ENCODE measurements at regions of chr1 and their contacts with region 1.

Region 1: DNA sequence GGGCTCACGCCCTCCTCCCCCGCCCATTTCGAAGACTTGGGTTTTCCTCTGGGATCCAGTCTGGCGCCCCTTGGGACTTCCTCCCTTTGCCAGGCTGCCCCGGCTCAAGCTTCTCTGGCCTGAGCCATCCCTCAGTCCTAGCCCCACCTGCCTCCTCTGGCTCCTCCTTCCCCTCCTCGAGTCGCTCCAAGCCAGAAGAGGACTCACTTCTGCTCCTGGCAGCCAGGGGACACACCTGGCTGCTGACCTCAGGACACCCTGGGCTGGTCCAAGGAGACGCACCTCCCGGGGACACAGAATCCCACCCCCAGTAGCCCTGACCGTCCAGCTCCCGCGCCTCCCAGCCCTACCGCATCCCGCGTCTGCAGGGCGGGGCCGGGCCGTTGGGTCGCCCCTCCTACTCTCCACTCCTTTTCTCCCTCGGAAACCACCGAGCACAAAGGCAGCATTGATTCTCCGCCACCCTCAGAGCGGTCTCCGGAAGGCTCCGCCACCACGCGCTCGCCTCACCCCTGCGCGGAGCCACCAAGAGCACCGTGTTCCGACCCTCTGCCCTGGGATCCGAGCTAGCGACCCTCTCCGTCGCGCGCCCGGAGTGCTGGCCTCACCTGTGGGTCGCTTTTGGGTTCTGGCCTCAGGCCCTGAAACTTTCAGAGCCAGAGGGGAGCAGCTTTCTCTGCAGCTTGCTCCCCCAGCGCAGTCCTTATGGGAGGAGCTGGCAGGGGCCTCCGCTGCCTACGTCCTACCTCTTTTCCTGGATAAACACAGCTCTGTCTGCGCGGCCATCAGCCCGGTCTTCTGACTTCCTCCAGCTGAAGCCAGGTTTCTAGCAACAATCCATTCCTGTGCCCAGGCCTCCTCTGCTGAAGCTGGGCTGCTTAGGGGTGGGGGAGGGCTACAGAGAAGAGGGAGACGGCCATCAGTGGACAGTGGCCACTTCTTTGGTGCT is at the start of gene C2CD4D:
- DNase-seq: peak; percentile 84
- H3K4me3 Mint-ChIP-seq: peak within 1 kb of the TSS; percentile 85
- H3K27ac Mint-ChIP-seq: peak within 1 kb of the TSS; percentile 91
- H3K4me1 Mint-ChIP-seq: peaks cover 41% of the 10 kb centered on the region
- H3K27me3 Mint-ChIP-seq: no peaks in the 10 kb centered on the region
- CTCF ChIP-seq: no peak
- total RNA-seq, gene C2CD4D: not detected in 2 replicates

Region 2: DNA sequence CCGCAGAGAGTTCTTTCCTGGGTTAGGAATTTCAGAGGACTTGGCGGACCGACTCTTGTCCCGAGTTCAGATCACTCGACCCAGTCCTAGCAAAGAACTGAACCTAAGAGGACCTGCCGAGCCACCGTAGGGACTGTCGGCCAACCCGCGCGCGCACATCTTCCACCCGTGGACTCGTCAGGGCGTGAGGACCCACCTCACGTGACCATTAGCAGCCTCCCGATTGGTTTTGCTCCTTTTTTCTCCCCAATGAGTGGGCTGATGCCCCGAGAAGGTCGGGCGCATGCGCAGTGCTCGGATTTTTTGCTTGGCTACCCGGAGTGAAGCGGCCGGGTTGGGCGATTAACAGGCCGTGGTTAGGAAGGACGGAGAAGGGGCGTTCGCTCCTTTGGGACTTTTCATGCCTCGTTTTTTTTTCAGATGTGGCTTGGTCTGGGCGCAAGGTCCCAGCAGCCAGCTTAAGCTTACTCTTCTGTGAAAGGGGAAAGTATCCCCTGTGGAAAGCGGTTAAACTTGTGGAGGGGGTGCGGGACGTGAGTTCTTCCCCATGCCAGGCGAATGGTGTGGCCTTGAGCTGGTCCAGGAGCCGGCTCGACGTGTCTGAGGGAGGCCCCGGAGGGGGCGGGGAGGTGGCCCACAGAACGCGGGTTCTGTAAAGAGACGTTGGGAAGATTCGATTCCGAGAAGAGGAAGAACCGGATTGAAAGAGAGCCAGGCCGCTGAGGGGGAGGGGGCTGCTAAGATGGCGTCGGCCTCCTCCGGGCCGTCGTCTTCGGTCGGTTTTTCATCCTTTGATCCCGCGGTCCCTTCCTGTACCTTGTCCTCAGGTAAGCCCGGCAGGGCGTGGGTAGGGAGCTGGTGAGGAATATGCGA is 641.2 kb before region 1 on chr1 and contains the start of gene PIP5K1A:
- CTCF ChIA-PET with region 1: no interaction called
- POLR2A ChIA-PET with region 1: interaction called, 3 read pairs
- intact Hi-C with region 1: loop called (anchors 2 kb)
- DNase-seq: peak; percentile 100
- H3K4me3 Mint-ChIP-seq: peak within 1 kb of the TSS; percentile 93
- H3K27ac Mint-ChIP-seq: peak within 1 kb of the TSS; percentile 95
- H3K4me1 Mint-ChIP-seq: peaks cover 40% of the 10 kb centered on the region
- H3K27me3 Mint-ChIP-seq: no peaks in the 10 kb centered on the region
- CTCF ChIP-seq: no peak
- total RNA-seq, gene PIP5K1A: 150 and 163 TPM in 2 replicates

Region 3: DNA sequence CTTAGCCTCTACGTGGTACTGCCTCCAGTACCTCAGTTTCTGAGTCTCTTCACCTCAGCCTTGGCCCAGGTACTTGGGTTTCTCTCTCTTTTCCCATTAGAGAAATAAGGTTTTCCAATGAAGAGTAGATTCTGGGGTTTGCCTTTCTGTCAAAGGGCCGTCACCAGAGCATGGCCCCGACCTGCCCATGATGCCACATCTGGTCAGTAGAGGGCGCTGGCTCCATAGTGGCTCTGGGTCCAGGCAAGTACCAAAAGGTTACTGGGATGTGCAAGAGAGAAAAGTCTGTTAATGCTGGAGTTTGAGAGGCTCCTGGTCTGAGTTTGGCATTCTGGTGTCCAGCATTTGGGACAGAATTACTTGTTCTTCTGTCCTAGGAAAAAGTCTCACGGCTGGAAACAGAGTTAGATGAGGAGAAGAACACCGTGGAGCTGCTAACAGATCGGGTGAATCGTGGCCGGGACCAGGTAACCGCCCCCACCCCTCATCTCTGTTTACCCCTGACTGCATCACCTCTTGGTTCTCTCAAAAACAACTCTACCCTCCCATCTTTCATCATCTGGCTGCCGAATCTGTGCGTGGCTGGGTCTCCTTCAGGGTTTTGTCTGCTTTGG is 305.0 kb before region 1 on chr1:
- CTCF ChIA-PET with region 1: interaction called, 8 read pairs
- POLR2A ChIA-PET with region 1: interaction called, 4 read pairs
- intact Hi-C with region 1: loop called (anchors 1 kb)
- DNase-seq: peak; percentile 89
- H3K4me3 Mint-ChIP-seq: no peak overlapping the region
- H3K27ac Mint-ChIP-seq: no peak overlapping the region
- H3K4me1 Mint-ChIP-seq: peaks cover 28% of the 10 kb centered on the region
- H3K27me3 Mint-ChIP-seq: no peaks in the 10 kb centered on the region
- CTCF ChIP-seq: peak; percentile 95

Region 4: DNA sequence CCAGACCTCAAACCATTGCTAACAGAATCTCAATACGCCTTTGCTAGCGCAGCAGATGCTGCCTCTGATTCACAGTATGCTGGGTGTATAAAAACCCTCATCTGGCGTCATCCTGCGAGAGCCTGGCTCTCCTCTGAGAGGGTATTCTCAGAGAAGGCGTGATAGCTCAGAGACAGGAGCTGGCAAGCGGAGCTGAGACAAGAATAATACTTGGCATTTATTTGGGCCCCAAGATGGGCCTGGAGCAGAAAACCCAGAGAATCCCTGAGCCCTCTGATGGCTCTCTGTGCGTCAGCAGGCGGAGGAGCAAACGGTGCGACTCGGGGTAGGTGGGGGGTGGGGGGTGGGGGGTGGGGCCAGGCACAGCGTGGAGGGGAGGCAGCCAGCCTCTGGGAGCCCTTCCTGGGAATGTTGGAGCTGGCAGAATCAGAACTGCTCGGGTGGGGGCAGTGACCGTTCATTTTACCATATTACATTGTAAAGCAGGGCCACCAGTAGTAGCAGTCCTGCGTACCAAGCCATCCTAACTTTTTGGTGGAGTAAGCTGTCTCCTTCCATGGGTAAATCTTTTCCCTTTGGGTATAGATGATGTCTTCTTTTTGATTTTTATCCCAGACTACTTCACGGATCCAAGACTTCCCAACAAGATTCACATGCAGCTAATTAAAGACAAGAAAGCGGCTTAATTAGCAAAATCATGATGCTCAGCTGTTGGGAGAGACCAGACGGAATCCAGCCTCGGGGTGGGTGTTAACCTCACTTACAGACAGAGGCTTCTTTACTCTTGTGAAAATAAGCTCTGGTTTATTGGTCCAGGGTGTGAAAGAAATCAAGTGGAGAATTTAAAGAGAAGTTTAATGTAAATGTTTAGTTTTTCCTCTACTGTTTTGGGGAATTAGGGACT is 111.3 kb before region 1 on chr1:
- CTCF ChIA-PET with region 1: interaction called, 26 read pairs
- POLR2A ChIA-PET with region 1: no interaction called
- intact Hi-C with region 1: no loop called
- DNase-seq: no peak
- H3K4me3 Mint-ChIP-seq: no peak overlapping the region
- H3K27ac Mint-ChIP-seq: no peak overlapping the region
- H3K4me1 Mint-ChIP-seq: no peaks in the 10 kb centered on the region
- H3K27me3 Mint-ChIP-seq: peaks cover 27% of the 10 kb centered on the region
- CTCF ChIP-seq: no peak

Region 5: GRCh38 chr1:151762941-151763921 is 76.5 kb before region 1 on chr1 and contains the start of gene MRPL9:
- CTCF ChIA-PET with region 1: interaction called, 16 read pairs
- POLR2A ChIA-PET with region 1: interaction called, 8 read pairs
- intact Hi-C with region 1: loop called (anchors 1 kb)
- DNase-seq: peak; percentile 84
- H3K4me3 Mint-ChIP-seq: peak within 1 kb of the TSS; percentile 92
- H3K27ac Mint-ChIP-seq: peak within 1 kb of the TSS; percentile 97
- H3K4me1 Mint-ChIP-seq: peaks cover 17% of the 10 kb centered on the region
- H3K27me3 Mint-ChIP-seq: no peaks in the 10 kb centered on the region
- CTCF ChIP-seq: no peak
- total RNA-seq, gene MRPL9: 145 and 146 TPM in 2 replicates

Region 6: GRCh38 chr1:151790071-151790940 is 49.4 kb before region 1 on chr1 and contains the start of gene TDRKH:
- CTCF ChIA-PET with region 1: interaction called, 5 read pairs
- POLR2A ChIA-PET with region 1: interaction called, 5 read pairs
- intact Hi-C with region 1: loop called (anchors 5 kb)
- DNase-seq: peak; percentile 100
- H3K4me3 Mint-ChIP-seq: peak within 1 kb of the TSS; percentile 83
- H3K27ac Mint-ChIP-seq: peak within 1 kb of the TSS; percentile 47
- H3K4me1 Mint-ChIP-seq: peaks cover 9% of the 10 kb centered on the region
- H3K27me3 Mint-ChIP-seq: no peaks in the 10 kb centered on the region
- CTCF ChIP-seq: peak; percentile 26
- total RNA-seq, gene TDRKH: 5.6 and 10.6 TPM in 2 replicates

Region 7: GRCh38 chr1:151858030-151858691 is 18.4 kb after region 1 on chr1:
- CTCF ChIA-PET with region 1: interaction called, 18 read pairs
- POLR2A ChIA-PET with region 1: interaction called, 12 read pairs
- intact Hi-C with region 1: no loop called
- DNase-seq: peak; percentile 66
- H3K4me3 Mint-ChIP-seq: no peak overlapping the region
- H3K27ac Mint-ChIP-seq: peak overlapping the region; percentile 84
- H3K4me1 Mint-ChIP-seq: peaks cover 40% of the 10 kb centered on the region
- H3K27me3 Mint-ChIP-seq: no peaks in the 10 kb centered on the region
- CTCF ChIP-seq: no peak

Region 8: DNA sequence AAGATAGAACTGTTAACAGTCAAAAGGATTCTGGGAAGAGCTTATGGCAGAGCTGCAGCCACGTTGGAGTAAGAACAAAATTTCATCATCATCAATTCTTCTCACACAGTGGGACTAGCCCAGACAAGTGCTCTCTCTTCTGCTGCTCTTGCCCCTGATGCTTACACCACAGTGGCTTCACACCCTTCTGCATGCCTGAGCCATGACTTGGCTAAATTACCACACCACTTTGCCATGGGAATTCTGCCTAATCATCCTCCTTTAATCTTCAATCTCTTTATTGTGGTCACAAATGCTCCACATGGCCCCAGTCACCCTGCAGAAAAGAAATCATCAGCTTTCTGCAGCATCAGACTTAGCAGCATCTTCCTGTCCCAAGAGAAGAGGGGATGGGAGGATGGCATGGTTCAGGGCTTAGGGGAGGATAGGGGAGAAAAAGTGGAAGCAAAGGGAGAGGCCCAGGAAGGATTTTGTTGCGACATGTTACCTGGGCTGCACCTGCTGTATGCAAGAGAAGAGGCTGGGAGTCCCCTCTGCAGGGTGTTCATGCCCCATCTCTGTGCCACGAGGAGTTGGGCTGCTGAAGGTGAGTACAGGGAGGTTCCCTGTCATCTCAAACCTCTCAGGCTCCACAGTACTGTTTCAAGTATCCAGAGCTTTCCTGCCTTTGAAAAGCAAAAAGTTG is 328.2 kb after region 1 on chr1:
- CTCF ChIA-PET with region 1: no interaction called
- POLR2A ChIA-PET with region 1: no interaction called
- intact Hi-C with region 1: no loop called
- DNase-seq: peak; percentile 100
- H3K4me3 Mint-ChIP-seq: peak overlapping the region; percentile 49
- H3K27ac Mint-ChIP-seq: peak overlapping the region; percentile 99
- H3K4me1 Mint-ChIP-seq: peaks cover 70% of the 10 kb centered on the region
- H3K27me3 Mint-ChIP-seq: no peaks in the 10 kb centered on the region
- CTCF ChIP-seq: no peak

Measured in MCF 10A (cell line).